CD14-positive monocyte (primary cell): ENCODE measurements at regions of chr2 and their contacts with region 1.

Region 1: DNA sequence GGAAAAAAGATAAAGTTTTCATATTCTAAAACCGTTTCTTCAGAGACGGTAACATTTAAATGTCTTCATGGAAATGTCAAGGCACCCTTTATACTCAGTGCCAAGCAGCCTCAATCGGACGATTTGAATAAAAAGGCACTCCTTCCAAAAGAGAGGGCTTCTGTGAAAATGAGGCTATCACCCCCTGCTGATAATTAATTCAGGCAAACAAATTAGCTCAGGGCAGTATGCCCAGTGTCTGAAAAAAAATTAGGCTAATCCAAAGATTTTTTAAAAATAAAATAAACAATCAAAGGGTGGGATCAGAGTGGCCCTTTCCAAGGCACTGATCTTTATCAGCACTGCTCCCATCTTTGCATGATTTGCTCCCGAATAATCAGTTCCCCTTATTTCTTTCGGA is 151.0 kb upstream of the PID1 start:
- DNase-seq: no peak
- H3K4me3 ChIP-seq: no peak overlapping the region
- H3K4me3 Mint-ChIP-seq: no peak overlapping the region
- H3K27ac ChIP-seq: no peak overlapping the region
- H3K27ac Mint-ChIP-seq: no peak overlapping the region
- H3K4me1 ChIP-seq: peaks cover 17% of the 10 kb centered on the region in 2 donors
- H3K4me1 Mint-ChIP-seq: peaks cover 21% of the 10 kb centered on the region
- H3K27me3 ChIP-seq: no peaks in the 10 kb centered on the region
- H3K27me3 Mint-ChIP-seq: peaks cover 0 to 3% (median 0%) of the 10 kb centered on the region in 3 donors
- CTCF ChIP-seq: no peak

Region 2: GRCh38 chr2:229370509-229370908 is 51.6 kb before region 1 on chr2:
- intact Hi-C with region 1: loop called in 1 of 2 experiments (anchors 10 kb)
- DNase-seq: no peak
- H3K4me3 ChIP-seq: no peak overlapping the region
- H3K4me3 Mint-ChIP-seq: no peak overlapping the region
- H3K27ac ChIP-seq: no peak overlapping the region
- H3K27ac Mint-ChIP-seq: no peak overlapping the region
- H3K4me1 ChIP-seq: no peaks in the 10 kb centered on the region
- H3K4me1 Mint-ChIP-seq: no peaks in the 10 kb centered on the region
- H3K27me3 ChIP-seq: peaks cover 0 to 6% of the 10 kb centered on the region in 2 donors
- H3K27me3 Mint-ChIP-seq: peaks cover 4 to 18% (median 6%) of the 10 kb centered on the region in 3 donors
- CTCF ChIP-seq: no peak

Region 3: DNA sequence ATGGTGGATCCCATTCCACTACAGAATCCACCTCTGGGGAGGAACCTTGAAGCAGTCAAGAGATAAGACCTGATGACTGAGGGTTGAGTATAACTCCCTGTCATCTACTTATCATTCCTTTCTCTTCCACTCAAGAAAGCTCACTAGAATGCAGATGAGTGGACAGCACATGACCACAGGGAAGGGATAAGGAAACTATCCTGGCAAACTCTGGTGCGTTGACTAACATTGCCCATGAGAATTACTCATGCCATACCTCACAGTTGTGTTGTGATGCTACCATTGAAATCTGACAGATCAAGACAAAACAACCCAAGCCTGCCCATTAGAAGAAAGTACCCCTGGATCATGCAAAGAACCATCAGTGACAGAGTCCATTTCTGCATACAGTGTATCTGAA is 620.1 kb after region 1 on chr2:
- intact Hi-C with region 1: no loop called
- DNase-seq: no peak
- H3K4me3 ChIP-seq: no peak overlapping the region
- H3K4me3 Mint-ChIP-seq: no peak overlapping the region
- H3K27ac ChIP-seq: no peak overlapping the region
- H3K27ac Mint-ChIP-seq: no peak overlapping the region
- H3K4me1 ChIP-seq: no peaks in the 10 kb centered on the region
- H3K4me1 Mint-ChIP-seq: no peaks in the 10 kb centered on the region
- H3K27me3 ChIP-seq: no peaks in the 10 kb centered on the region
- H3K27me3 Mint-ChIP-seq: peaks cover 0 to 3% (median 0%) of the 10 kb centered on the region in 3 donors
- CTCF ChIP-seq: no peak